Dorsolateral prefrontal cortex (tissue), 120 donors: ENCODE measurements at regions of chr16 and their contacts with region 1.

Region 1: GRCh38 chr16:75519881-75520280 is 16.0 kb downstream of the CHST5 start:
- DNase-seq: no peak
- H3K4me3 ChIP-seq: no peak overlapping the region
- H3K27ac ChIP-seq: no peak overlapping the region
- H3K27me3 ChIP-seq: no peaks in the 10 kb centered on the region
- CTCF ChIP-seq: no peak

Region 2: DNA sequence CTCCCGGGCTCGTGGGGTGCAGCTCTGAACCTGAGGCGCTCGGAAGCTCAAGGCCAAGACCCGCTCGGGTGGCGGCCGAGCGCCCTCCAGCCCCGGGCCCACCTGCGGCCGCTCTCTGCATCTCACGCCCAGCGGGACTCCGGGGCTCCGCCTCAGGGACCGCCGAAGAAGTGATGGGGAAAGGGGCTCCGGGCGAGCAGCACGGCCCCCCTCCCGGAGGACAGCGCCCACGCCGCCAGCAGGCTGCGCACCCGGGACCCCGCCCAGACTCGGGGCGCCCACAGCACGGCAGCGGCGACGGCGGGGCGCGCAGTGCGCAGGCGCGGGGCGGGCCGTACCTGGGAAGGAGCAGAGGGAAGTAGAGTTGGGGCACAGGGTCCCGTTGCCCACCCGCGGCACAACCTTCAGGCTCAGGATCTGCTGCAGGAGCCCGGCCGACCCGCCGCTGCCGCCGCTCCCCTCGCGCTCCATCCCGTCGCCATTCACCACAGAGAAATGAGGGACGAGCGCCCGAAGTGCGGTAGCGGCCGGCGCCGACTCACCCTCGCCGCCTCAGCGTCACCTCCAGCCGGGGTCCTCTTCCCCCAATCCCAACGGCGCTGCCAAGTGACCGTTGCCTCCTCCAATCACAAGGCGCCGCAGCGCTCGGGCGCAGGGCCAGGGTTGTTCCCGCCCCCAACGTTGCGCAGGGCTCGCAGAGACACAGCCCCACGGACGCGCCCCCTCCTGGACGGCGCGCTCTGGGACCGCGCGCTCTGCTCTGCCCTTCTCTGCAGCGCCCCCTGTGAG is 55.6 kb before region 1 on chr16 and contains the start of gene TMEM170A:
- intact Hi-C with region 1: loop called in 1 of 2 experiments (anchors 2 kb)
- DNase-seq: peak; percentile 97 to 99 (median 98)
- H3K4me3 ChIP-seq: peak within 1 kb of the TSS; percentile 68 to 99 (median 95)
- H3K27ac ChIP-seq: peak within 1 kb of the TSS; percentile 86 to 99 (median 96)
- H3K27me3 ChIP-seq: no peaks in the 10 kb centered on the region
- CTCF ChIP-seq: peak in 55 of 56 donors; percentile 99 to 100 (median 100)
- total RNA-seq, gene TMEM170A: 20.2 to 47.4 (median 29.5) TPM

Region 3: DNA sequence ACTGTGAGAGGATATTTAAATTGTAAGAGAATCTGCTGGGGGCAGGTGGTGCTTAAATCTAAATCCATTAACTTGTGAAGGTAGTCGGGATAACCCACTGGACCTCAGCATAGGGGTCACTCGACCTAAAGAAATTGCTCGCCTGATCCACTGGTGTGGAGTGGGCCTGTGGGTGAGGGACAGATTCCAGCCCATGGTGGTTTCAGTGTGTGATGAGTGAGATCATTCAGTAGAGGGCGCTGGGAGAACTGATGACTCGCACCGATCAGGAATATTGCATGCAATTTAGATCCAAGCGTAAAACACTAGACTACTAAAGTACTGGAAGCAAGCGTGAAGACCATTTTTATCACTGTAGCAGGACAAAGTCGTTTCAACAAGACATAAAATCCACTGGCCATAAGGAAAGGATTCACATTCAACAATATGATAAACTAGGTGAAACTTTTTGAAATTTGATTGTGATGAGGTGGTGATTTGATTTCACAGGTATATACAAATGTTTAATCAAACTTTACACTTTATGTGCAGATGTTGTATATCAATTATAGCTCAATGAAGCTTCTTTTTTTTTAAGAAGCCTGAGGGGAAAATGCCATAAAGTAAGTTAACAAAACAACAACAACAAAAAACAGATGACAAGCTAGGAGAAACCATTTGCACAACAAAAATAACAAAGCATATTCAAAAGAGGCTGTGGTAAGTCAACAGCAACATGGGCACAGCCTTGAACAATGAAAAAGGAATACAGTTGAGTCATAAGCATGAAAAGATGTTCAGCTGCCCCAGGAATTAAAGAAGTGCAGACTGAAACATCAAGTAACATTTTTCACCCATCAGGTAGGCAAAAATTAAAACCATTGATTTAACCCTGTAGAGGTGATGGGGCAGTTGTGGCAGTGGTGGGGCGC is 47.9 kb before region 1 on chr16:
- intact Hi-C with region 1: loop called in 1 of 2 experiments (anchors 2 kb)
- DNase-seq: peak; percentile 33 to 81 (median 70)
- H3K4me3 ChIP-seq: no peak overlapping the region
- H3K27ac ChIP-seq: peak overlapping the region in 14 of 59 donors; percentile 0 to 73 (median 42)
- H3K27me3 ChIP-seq: no peaks in the 10 kb centered on the region
- CTCF ChIP-seq: peak; percentile 53 to 94 (median 83)

Region 4: GRCh38 chr16:75550211-75550662 is 30.4 kb after region 1 on chr16:
- intact Hi-C with region 1: loop called in 1 of 2 experiments (anchors 1 kb)
- DNase-seq: peak in 6 of 10 donors; percentile 40 to 74 (median 52)
- H3K4me3 ChIP-seq: peak overlapping the region in 16 of 59 donors; percentile 2 to 40 (median 14)
- H3K27ac ChIP-seq: peak overlapping the region in 55 of 59 donors; percentile 2 to 85 (median 71)
- H3K27me3 ChIP-seq: no peaks in the 10 kb centered on the region
- CTCF ChIP-seq: peak; percentile 35 to 77 (median 65)